Vagina (tissue), 2 donors: ENCODE measurements at regions of chr6 and their contacts with region 1.

Region 1: GRCh38 chr6:107209406-107210305 is 94.3 kb upstream of the BEND3 start:
- DNase-seq: no peak
- H3K4me3 ChIP-seq: no peak overlapping the region
- H3K27ac ChIP-seq: no peak overlapping the region
- H3K4me1 ChIP-seq: no peaks in the 10 kb centered on the region
- H3K27me3 ChIP-seq: no peaks in the 10 kb centered on the region
- CTCF ChIP-seq: no peak
- POLR2A ChIP-seq: no peak

Region 2: DNA sequence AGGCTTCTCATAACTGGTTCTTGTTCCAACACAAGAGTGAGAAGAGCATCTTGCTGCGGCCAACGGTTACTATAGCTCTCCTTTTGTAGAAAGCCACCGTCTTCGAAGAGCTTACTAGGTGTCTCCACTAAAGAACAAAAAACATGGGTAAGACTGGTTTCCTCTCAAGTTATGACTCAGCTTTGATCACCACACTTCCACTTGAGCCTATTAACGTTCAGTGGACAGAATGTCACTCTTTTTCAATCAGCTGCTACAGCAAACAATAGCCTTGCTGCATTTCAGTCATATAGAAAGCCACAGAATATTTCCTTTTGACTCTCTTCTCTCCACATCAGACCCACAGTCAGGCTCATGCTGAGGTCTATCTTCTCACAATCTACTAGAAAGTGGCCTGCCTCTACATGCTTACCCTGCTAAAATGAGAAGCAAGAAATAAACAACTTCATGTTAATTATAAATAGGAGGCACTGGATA is 1563.2 kb before region 1 on chr6:
- intact Hi-C with region 1: no loop called
- DNase-seq: no peak
- H3K4me3 ChIP-seq: no peak overlapping the region
- H3K27ac ChIP-seq: no peak overlapping the region
- H3K4me1 ChIP-seq: peaks cover 18% of the 10 kb centered on the region
- H3K27me3 ChIP-seq: no peaks in the 10 kb centered on the region
- CTCF ChIP-seq: no peak
- POLR2A ChIP-seq: no peak

Region 3: DNA sequence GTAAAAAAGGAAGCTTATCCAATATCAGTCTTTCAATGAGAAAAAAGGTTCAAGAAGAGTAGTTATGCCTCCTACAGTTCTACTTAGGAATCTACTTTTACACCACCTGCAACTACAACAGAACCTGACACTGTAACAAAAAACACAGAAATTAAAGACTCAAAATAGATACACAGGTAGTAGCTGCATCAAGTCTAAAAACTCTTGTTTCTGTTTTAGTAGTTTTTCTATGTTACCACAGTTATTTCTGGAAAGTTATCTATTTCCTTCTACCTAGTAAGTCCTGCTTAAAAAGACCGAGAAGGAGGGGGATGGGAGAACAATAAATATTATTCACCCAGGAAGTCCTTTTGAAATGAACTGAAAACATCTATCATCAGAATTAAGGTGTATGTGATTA is 936.6 kb before region 1 on chr6:
- intact Hi-C with region 1: loop called (anchors 5 kb)
- DNase-seq: no peak
- H3K4me3 ChIP-seq: no peak overlapping the region
- H3K27ac ChIP-seq: no peak overlapping the region
- H3K4me1 ChIP-seq: no peaks in the 10 kb centered on the region
- H3K27me3 ChIP-seq: no peaks in the 10 kb centered on the region
- CTCF ChIP-seq: no peak
- POLR2A ChIP-seq: no peak

Region 4: DNA sequence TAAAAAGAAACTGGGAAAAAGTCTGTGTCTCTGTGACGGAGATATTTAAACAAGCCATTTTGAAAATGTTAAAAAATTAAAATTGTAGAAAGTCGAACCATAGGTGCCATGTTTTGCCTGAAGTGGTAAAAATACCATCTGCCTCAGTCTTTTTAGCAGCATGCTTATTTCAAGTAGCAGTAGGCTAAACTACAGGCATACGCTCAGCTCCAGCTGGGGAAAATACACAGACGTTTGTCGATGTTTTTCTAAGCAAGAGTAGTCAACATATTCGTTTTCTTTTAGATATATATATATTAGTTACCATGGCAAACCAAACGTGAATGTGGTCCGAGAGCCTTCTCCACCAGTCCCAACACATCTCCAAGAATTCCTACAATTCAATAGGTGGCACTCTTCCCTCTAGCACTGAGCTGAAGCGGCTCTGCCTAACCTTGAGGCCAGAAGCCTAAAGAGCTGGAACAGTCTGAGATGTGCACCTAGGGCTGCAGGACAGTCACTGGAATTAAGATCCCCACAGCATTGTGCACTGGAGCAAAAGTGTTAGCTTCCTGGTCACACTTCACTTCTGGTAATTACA is 24.2 kb before region 1 on chr6:
- intact Hi-C with region 1: no loop called
- DNase-seq: no peak
- H3K4me3 ChIP-seq: no peak overlapping the region
- H3K27ac ChIP-seq: no peak overlapping the region
- H3K4me1 ChIP-seq: no peaks in the 10 kb centered on the region
- H3K27me3 ChIP-seq: no peaks in the 10 kb centered on the region
- CTCF ChIP-seq: no peak
- POLR2A ChIP-seq: no peak

Region 5: DNA sequence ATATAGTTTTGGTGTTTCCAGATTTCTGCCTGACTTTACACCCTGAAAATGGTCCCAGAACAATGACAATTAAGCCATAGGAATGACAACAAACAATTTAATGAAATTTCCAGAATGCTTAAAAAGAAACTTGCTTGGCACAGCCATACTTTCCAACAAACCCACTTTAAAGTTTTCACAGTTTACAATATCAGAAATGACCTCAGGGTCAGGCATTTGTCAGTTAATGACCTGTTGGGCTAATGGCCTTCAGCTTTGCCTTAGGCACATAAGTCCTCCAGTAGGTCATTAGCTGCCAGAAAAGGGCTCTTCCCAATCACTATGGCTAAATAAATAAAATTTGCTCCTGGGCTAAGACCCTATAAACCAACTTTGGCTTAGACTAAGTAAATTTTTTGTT is 50.3 kb after region 1 on chr6:
- intact Hi-C with region 1: no loop called
- DNase-seq: no peak
- H3K4me3 ChIP-seq: no peak overlapping the region
- H3K27ac ChIP-seq: no peak overlapping the region
- H3K4me1 ChIP-seq: no peaks in the 10 kb centered on the region
- H3K27me3 ChIP-seq: no peaks in the 10 kb centered on the region
- CTCF ChIP-seq: no peak
- POLR2A ChIP-seq: no peak